ENCODE measurements at regions of chr2 and their contacts with region 1.

Region 1: GRCh38 chr2:105254531-105255210 is 13.1 kb downstream of the GPR45 start:
- DNase-seq: no peak

Region 2: GRCh38 chr2:105274046-105274445 is 19.4 kb after region 1 on chr2:
- intact Hi-C with region 1: loop called in 1 of 2 experiments (anchors 1 kb)
- DNase-seq: no peak

Region 3: GRCh38 chr2:105454801-105455485 is 200.3 kb after region 1 on chr2:
- intact Hi-C with region 1: no loop called
- DNase-seq: peak; percentile 87